PC-9 (cell line): ENCODE measurements at regions of chr16 and their contacts with region 1.

Region 1: GRCh38 chr16:12026741-12027490 is 50.4 kb downstream of the SNX29 start:
- DNase-seq: peak; percentile 90 to 96
- H3K4me3 ChIP-seq: peak overlapping the region; percentile 52
- H3K27ac ChIP-seq: peak overlapping the region; percentile 65
- H3K4me1 ChIP-seq: peaks cover 70% of the 10 kb centered on the region
- H3K27me3 ChIP-seq: no peaks in the 10 kb centered on the region
- CTCF ChIP-seq: no peak

Region 2: GRCh38 chr16:11915644-11916523 is 111.0 kb before region 1 on chr16 and contains the start of gene GSPT1:
- CTCF ChIA-PET with region 1: no interaction called
- POLR2A ChIA-PET with region 1: no interaction called
- intact Hi-C with region 1: loop called (anchors 5 kb)
- DNase-seq: peak; percentile 95 to 100
- H3K4me3 ChIP-seq: peak within 1 kb of the TSS; percentile 93
- H3K27ac ChIP-seq: peak within 1 kb of the TSS; percentile 97
- H3K4me1 ChIP-seq: peaks cover 40% of the 10 kb centered on the region
- H3K27me3 ChIP-seq: no peaks in the 10 kb centered on the region
- CTCF ChIP-seq: 0 out of 2 replicates have a peak, but pooled peaks have one; percentile 22
- total RNA-seq, gene GSPT1: 146 and 161 TPM in 2 replicates

Region 3: GRCh38 chr16:11977376-11978041 is 49.4 kb before region 1 on chr16:
- CTCF ChIA-PET with region 1: no interaction called
- POLR2A ChIA-PET with region 1: interaction called, 8 read pairs
- intact Hi-C with region 1: loop called (anchors 2 kb)
- DNase-seq: peak; percentile 35 to 48
- H3K4me3 ChIP-seq: peak overlapping the region; percentile 93
- H3K27ac ChIP-seq: peak overlapping the region; percentile 44
- H3K4me1 ChIP-seq: peaks cover 19% of the 10 kb centered on the region; the same call in 1 of the 2 replicates
- H3K27me3 ChIP-seq: no peaks in the 10 kb centered on the region
- CTCF ChIP-seq: no peak

Region 4: DNA sequence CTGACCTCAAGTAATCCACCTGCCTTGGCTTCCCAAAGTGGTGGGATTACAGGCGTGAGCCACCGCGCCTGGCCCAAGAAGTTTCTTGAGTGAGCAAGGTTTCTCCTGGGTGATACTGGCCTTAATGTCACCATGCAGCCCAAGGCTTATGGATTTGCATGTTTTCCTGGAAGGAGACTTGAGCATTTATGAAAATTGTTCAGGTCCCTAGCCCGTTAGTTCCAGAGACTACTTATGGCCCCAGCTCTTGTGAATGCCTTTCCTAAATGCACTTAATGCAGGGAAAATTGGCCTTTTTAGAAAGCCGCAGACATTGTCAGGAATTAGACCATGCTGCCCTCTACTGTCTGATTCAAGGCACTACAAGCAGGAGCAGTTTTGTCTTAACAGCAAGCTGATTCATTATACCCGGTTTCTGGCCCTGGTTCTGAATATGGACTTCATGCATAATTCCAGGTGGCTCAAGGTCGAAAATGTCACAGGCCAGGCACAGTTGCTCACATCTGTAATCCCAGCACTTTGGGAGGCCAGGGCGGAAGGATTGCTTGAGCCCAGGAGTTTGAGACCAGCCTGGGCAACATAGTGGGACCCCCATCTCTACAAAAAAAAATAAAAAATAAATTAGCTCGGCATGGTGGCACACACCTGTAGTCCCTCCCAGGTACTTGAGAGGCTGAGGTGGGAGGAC is 40.9 kb after region 1 on chr16:
- CTCF ChIA-PET with region 1: interaction called, 5 read pairs
- POLR2A ChIA-PET with region 1: no interaction called
- intact Hi-C with region 1: loop called (anchors 2 kb)
- DNase-seq: peak; percentile 55 to 59
- H3K4me3 ChIP-seq: no peak overlapping the region
- H3K27ac ChIP-seq: no peak overlapping the region
- H3K4me1 ChIP-seq: no peaks in the 10 kb centered on the region
- H3K27me3 ChIP-seq: no peaks in the 10 kb centered on the region
- CTCF ChIP-seq: peak; percentile 95